SK-N-SH (cell line): ENCODE measurements at regions of chr17 and their contacts with region 1.

Region 1: GRCh38 chr17:78865682-78866390 is 25.2 kb upstream of the USP36 start:
- DNase-seq: peak; percentile 89
- H3K4me3 ChIP-seq: peak overlapping the region in 1 of 2 experiments; percentile 26; a peak in 1 of 4 replicates
- H3K27ac ChIP-seq: peak overlapping the region; percentile 21 to 53; a peak in 2 of 4 replicates
- H3K4me1 ChIP-seq: peaks cover 3 to 19% of the 10 kb centered on the region in 2 experiments; a peak in 3 of 4 replicates
- H3K27me3 ChIP-seq: no peaks in the 10 kb centered on the region
- CTCF ChIP-seq: peak; percentile 99
- EP300 ChIP-seq: peak in 1 of 2 experiments; percentile 28; a peak in 2 of 4 replicates
- RAD21 ChIP-seq: peak; percentile 99

Region 2: DNA sequence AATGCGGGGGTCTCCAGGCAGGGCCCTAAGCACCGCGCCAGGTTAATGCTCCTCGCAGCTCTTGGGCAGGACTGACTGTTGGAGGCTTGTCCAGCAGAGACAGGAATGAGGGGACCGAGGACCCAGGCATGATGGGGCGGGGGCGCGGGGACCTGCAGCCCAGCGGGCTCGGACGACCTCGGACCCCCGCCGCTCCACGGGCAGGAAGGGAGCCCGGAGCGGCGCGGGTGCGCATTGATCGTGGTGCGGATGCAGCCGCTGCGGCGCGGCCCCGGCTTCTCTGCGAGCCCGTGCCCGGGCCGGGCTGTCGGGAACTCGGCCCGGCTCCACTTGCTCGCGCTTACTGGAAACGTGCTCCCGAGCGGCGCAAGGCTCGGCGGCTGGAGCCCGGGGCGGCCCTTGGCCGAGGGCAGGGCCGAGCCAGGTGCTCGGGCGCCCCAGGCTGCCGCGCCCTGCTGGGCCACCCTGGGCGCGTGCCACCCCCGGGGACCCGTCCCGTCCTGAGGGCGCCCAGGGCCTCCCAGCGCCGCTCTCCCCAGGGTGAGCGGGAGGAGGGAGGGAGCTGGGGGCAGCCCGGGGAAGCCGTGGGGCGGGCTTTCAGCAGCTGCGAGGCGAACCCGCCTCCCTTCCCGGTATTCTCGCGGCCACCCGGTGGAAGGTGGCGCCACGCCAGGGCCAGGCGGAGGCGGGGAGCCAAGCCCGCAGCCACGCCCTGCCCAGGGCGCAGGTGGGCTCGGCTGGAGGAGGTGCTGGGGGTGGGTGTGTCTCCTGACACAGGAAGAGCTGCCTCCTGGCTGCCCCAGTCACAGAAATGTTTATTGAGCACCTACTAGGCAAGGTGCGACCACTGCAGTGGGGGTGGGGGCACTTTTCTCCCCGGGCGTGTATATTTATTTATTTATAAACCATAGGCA is 551.8 kb before region 1 on chr17:
- CTCF ChIA-PET with region 1: no interaction called
- POLR2A ChIA-PET with region 1: no interaction called
- DNase-seq: peak; percentile 95
- H3K4me3 ChIP-seq: peak overlapping the region; percentile 48 to 50
- H3K27ac ChIP-seq: peak overlapping the region; percentile 18 to 99; a peak in 3 of 4 replicates
- H3K4me1 ChIP-seq: peaks cover 21 to 32% of the 10 kb centered on the region in 2 experiments; a peak in 3 of 4 replicates
- H3K27me3 ChIP-seq: no peaks in the 10 kb centered on the region
- CTCF ChIP-seq: 0 out of 2 replicates have a peak, but pooled peaks have one; percentile 8
- EP300 ChIP-seq: no peak
- RAD21 ChIP-seq: no peak

Region 3: DNA sequence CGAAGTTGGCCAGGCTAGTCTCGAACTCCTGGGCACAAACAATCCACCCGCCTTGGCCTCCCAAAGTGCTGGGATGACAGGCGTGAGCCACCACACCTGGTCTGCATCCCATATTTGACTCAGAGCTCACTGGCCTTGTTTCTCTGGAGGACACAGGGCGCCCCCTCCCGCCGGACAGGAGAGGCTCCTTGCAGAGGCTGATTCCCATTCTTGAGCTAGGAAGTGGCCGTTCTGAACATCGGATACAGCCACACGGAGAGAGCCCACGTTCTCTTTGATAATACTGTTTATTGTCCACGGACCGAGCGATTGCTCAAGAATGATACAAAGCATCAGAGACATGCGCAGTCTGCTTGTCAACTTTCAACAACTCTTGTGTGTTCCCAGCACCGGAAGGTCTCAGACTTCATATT is 13.1 kb before region 1 on chr17:
- CTCF ChIA-PET with region 1: interaction called, 46 read pairs
- POLR2A ChIA-PET with region 1: no interaction called
- DNase-seq: no peak
- H3K4me3 ChIP-seq: no peak overlapping the region
- H3K27ac ChIP-seq: no peak overlapping the region
- H3K4me1 ChIP-seq: no peaks in the 10 kb centered on the region
- H3K27me3 ChIP-seq: no peaks in the 10 kb centered on the region
- CTCF ChIP-seq: no peak
- EP300 ChIP-seq: no peak
- RAD21 ChIP-seq: no peak

Region 4: DNA sequence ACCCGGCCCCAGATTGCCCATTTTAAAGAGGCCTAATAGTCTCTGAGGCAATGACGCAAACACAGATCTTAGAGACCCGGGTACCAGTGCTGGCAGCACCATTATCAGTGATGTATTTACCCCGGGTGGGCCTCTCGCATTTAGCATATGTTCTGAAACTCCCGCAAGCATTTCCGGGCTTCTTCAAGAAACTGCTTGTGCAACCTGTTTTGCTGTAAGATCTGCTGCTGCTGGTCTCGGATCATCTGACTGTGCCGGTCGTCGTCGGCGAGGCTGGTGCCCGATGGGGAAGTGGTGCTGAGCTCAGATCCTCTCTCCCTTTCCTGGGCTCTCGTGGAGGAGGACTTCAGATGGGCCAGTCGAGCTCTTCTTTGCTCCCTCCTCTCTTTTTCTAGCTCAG is 24.7 kb after region 1 on chr17:
- CTCF ChIA-PET with region 1: interaction called, 54 read pairs
- POLR2A ChIA-PET with region 1: no interaction called
- DNase-seq: no peak
- H3K4me3 ChIP-seq: no peak overlapping the region
- H3K27ac ChIP-seq: peak overlapping the region in 1 of 2 experiments; percentile 98; a peak in 2 of 4 replicates
- H3K4me1 ChIP-seq: peaks cover 0 to 60% of the 10 kb centered on the region in 2 experiments; a peak in 2 of 4 replicates
- H3K27me3 ChIP-seq: no peaks in the 10 kb centered on the region
- CTCF ChIP-seq: no peak
- EP300 ChIP-seq: no peak
- RAD21 ChIP-seq: no peak

Region 5: DNA sequence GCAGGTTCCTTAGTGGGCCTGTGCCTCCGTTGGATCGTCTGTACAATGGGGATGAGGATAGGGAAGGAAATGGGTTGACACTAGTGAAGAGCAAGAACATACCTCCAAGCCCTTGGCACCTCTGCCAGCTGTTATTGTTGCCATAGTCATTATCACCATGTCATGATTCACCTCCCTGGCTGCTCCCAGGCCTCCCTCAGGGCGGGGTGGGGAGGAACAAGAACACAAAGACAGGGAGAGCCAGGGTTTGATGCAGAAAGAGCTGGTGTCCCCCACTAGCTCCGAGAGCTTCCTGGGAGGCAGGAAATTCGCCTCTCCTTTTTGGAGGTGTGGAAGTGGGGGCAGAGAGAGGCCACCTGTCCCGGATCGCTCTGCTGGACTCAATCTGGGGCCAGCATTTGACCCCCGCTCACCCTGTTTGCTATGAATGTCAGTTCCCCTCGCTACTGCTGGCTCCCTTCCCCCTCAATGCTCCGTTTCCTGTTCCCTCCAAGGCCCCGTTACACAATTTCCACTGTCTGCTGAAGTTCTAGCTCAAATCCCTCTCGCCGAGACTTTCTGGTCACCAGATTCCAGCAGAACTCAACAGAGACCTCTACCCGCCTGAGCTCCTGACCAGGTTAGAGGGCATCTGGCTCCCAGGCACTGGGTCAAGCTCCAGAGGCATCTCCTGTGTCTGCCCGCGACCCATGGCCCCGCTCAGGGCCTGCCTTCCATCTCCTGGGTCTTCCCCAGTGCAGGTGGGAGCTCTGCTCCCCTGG is 50.2 kb after region 1 on chr17:
- CTCF ChIA-PET with region 1: interaction called, 15 read pairs
- POLR2A ChIA-PET with region 1: no interaction called
- DNase-seq: no peak
- H3K4me3 ChIP-seq: no peak overlapping the region
- H3K27ac ChIP-seq: peak overlapping the region; percentile 8 to 84; a peak in 3 of 4 replicates
- H3K4me1 ChIP-seq: peaks cover 10 to 60% of the 10 kb centered on the region in 2 experiments; a peak in 3 of 4 replicates
- H3K27me3 ChIP-seq: no peaks in the 10 kb centered on the region
- CTCF ChIP-seq: no peak
- EP300 ChIP-seq: no peak
- RAD21 ChIP-seq: no peak

Region 6: DNA sequence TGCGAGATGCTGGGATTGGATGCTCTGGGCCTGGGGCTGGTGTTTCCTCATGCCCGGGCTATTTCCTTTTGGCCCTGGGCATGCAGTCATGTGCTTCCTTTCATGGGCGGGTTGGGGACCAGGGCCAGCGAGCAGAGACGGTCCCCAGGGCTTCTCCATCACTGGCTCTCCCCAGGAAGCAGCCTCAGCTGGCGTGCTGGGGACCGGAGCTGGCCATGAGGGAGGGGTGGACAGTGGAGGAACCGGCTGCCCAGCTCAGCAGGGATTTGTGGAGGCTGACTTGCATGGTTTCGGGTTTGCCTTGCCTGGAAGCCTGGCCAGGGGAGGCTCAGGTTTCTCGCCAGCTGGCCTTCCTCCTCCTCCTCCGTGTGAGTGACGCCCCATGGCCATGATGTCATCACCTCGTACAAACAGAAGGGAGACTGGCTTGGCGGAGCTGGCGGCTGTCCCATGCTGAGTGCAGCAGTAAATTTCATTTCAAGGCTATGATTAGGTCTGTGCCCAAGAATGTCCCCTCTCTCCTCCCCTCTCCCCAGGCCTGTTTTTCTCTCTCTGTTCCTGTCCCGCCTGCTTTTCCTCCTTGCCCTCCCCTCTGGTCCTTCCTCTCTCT is 68.2 kb after region 1 on chr17:
- CTCF ChIA-PET with region 1: interaction called, 24 read pairs
- POLR2A ChIA-PET with region 1: interaction called, 5 read pairs
- DNase-seq: peak; percentile 86
- H3K4me3 ChIP-seq: peak overlapping the region; percentile 23 to 55
- H3K27ac ChIP-seq: peak overlapping the region; percentile 98
- H3K4me1 ChIP-seq: peaks cover 37 to 43% of the 10 kb centered on the region in 2 experiments
- H3K27me3 ChIP-seq: no peaks in the 10 kb centered on the region
- CTCF ChIP-seq: no peak
- EP300 ChIP-seq: peak in 1 of 2 experiments; percentile 66; a peak in 2 of 4 replicates
- RAD21 ChIP-seq: no peak

Region 7: GRCh38 chr17:78993241-78993956 is 127.6 kb after region 1 on chr17:
- CTCF ChIA-PET with region 1: interaction called, 13 read pairs
- POLR2A ChIA-PET with region 1: no interaction called
- DNase-seq: peak; percentile 94
- H3K4me3 ChIP-seq: no peak overlapping the region; a peak in 1 of 4 replicates
- H3K27ac ChIP-seq: no peak overlapping the region; a peak in 1 of 4 replicates
- H3K4me1 ChIP-seq: peaks cover 0 to 10% of the 10 kb centered on the region in 2 experiments; a peak in 1 of 4 replicates
- H3K27me3 ChIP-seq: no peaks in the 10 kb centered on the region
- CTCF ChIP-seq: peak; percentile 98
- EP300 ChIP-seq: no peak
- RAD21 ChIP-seq: peak; percentile 71